ENCODE measurements at regions of chr19 and their contacts with region 1.

Region 1: DNA sequence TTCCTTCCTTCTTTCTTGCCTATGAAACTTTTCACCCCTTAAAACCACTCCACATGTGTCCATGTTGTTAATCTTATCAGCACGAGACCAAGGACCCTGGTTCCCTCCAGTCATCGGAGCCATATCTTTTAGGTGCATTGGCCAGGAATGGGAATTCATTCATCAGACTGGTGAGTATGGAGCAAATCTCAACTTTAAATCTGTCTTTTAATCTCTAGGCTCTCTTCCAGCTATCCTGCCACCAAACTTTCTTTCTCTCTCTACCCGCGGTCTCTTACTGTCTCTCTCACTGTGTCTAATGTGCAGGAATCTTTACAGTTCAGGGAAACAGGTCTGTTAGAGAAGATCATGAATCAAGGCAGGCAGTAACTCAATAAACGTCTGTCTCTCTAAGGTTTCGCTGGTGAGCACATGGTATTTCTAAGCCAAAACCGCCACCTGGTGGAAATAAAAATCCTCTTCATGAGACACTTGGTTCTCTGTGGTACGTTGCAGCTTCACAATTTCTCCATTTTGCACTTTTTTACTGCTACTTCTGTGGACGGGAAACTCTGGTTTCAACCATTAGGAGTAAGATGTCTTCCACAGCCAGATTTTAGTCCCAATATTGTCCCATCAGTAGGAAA is 16.1 kb downstream of the LGALS16 start:
- DNase-seq: peak; percentile 54
- H3K4me3 Mint-ChIP-seq: no peak overlapping the region
- H3K27ac Mint-ChIP-seq: no peak overlapping the region
- H3K4me1 Mint-ChIP-seq: peaks cover 32% of the 10 kb centered on the region
- H3K27me3 Mint-ChIP-seq: peaks cover 11% of the 10 kb centered on the region

Region 2: DNA sequence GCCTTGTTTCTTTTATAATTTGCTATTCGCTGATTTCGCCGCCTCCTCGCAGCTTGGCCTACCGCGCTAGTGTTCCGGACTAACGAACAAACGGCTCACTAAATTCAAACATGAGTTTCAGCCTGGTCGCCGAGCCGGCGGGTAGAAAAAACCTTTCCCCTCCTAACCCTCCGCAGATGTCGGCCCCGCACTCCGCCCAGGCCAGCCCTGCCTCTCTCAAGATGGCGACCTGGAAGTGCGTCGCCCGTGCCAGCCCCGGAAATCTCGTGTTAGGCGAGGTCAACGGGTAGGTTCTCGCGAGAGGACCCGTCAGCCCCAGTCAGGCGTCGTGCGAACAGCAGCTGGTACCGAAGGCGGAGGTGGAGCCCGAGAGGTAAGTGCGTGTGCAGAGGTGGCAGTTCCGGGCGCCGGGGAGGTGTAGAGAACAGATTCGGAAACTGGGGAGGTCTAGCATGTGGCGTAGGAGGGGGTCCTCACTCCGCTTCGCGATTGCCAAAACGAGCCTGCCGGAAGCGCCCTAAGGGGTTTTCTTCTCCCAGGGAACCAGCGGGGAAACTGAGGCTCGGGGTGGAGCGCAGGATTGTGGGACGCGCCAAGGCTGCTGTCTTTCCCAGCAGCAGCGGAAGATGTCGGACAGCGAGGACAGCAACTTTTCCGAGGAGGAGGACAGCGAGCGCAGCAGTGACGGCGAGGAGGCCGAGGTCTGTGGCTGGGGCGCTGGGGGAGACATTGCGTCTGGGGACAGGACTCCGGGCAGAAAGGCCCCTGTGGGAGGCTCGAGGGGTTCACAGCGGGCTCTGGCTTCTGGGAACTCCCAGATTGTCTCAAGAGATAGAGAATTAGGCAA is 226.4 kb before region 1 on chr19 and contains the start of gene SUPT5H:
- CTCF ChIA-PET with region 1: interaction called, 26 read pairs
- POLR2A ChIA-PET with region 1: no interaction called
- intact Hi-C with region 1: loop called (anchors 2 kb)
- DNase-seq: peak; percentile 99
- H3K4me3 Mint-ChIP-seq: peak within 1 kb of the TSS; percentile 98
- H3K27ac Mint-ChIP-seq: peak within 1 kb of the TSS; percentile 99
- H3K4me1 Mint-ChIP-seq: peaks cover 47% of the 10 kb centered on the region
- H3K27me3 Mint-ChIP-seq: no peaks in the 10 kb centered on the region
- total RNA-seq, gene SUPT5H: 180 to 183 TPM

Region 3: DNA sequence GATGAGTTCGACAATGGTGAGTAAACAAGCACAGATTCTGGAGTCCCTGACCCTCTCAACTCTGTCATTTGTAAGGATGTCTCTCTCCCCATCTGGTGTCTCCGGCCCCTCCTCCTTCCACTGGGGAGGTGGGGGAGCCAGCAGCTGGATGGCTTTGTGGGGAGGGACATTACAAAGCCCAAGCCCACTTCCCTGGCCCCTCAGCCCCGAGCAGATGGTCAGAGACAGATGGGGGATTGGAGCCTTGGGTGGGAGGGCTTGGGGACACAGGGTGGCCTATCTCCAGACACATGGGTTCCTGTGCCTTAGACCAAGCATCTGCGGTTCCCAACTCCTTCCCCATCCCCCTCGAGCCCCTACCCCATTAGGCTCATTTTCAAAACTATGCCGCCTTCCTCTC is 188.7 kb before region 1 on chr19:
- CTCF ChIA-PET with region 1: no interaction called
- POLR2A ChIA-PET with region 1: no interaction called
- intact Hi-C with region 1: no loop called
- DNase-seq: no peak
- H3K4me3 Mint-ChIP-seq: peak overlapping the region; percentile 48
- H3K27ac Mint-ChIP-seq: no peak overlapping the region
- H3K4me1 Mint-ChIP-seq: peaks cover 25% of the 10 kb centered on the region
- H3K27me3 Mint-ChIP-seq: no peaks in the 10 kb centered on the region

Region 4: DNA sequence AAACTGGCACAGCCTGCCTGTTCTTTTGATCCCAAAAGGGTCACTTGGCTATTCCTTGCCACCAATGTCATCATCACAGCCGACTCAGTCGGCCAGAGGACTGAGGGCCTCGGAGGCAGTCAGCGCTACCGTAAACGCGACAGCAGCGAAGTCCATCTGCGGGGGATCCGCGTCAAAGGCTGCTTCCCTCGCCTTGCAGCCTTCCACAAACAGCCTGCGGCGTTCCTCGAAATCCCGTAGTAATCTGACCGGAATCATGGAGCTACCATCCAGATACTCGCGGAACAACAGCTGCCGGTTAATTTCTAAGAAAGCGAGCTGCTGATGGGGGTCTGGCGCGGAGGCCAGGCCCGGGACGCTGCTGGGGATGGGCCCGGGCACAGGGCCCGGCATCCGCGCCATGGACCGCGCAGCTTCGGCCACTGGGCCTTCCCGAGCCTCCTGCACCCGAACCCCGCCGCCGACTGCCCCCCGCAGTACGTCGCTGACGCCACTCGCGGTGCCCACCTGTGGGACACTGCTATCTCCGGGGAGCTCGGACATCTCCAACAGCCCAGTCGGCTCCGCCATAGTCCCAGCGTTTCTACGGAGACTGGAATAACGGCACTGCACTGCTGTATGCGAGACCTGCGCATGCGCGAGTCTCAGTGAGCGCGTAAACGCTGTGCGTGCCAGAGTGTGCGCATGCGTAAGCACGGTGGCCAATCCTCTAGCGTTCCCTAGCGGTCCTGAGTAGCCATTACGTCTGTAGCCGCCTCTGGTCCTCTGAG is 139.4 kb before region 1 on chr19 and contains the start of gene EID2B:
- CTCF ChIA-PET with region 1: interaction called, 12 read pairs
- POLR2A ChIA-PET with region 1: interaction called, 3 read pairs
- intact Hi-C with region 1: no loop called
- DNase-seq: peak; percentile 96
- H3K4me3 Mint-ChIP-seq: peak within 1 kb of the TSS; percentile 91
- H3K27ac Mint-ChIP-seq: peak within 1 kb of the TSS; percentile 65
- H3K4me1 Mint-ChIP-seq: peaks cover 20% of the 10 kb centered on the region
- H3K27me3 Mint-ChIP-seq: no peaks in the 10 kb centered on the region
- total RNA-seq, gene EID2B: 3.3 to 3.8 TPM

Region 5: DNA sequence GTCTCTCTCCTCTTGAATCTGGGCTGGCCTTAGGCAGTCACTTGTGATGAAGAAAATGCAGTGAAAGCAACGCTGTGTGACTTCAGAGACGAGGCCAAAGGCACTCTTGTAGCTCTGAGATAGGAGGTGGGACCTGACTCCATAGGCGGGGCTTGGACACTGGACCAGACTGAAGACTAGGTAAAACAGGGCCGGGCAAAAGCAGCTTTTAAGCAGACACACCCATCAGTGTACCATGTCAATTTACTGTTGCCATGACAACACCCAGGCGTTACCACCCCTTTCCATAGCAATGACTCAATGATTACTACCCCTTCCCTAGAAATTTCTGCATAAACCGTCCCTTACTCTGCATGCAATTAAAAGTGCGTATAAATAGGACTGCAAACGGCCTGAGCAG is 125.3 kb before region 1 on chr19:
- CTCF ChIA-PET with region 1: interaction called, 137 read pairs
- POLR2A ChIA-PET with region 1: interaction called, 4 read pairs
- intact Hi-C with region 1: loop called (anchors 1 kb)
- DNase-seq: peak; percentile 34
- H3K4me3 Mint-ChIP-seq: no peak overlapping the region
- H3K27ac Mint-ChIP-seq: no peak overlapping the region
- H3K4me1 Mint-ChIP-seq: peaks cover 41% of the 10 kb centered on the region
- H3K27me3 Mint-ChIP-seq: no peaks in the 10 kb centered on the region

Region 6: DNA sequence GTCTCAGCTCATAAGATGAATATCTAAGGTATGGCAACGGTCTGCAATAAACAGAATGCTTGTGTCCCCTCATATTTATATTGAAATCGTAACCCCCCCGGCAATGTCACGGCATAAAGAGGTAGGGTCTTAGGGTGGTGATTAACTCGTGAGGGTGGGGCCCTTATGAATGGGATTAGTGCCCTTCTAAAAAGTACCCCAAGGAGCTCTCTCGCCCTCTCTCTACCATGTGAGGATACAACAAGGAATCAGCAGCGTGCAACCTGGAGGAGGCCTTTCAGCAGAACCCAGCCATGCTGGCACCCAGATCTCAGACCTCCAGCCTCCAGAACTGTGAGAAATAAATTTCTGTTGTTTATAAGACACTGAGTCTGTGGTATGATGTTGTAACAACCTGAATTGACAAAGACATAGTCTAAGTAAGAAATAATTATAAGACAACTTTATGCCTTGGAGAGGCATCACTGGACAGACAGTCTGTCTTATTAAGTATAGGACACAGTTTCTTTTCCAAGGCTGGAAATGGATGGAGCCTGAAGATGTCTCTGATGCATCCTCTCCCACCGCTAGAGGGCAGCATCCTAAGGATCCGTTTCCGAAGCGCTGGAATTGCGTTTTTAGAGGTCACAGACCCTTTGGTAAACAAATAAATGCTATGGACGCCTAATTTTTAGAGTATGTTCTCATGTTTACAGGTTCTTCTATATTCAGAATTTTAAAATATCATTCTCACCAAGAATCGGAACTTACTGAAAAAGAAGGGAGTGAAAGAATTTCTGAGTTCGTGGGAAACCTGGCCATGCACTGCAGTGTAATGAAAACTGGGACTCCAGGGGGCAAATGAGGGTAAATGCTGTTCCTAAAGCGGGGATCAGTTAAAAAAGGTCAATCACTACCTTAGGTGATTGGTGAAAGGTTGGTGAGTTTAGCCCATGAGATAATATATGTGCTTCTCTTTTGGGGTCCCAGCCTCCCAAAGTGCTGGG is 93.5 kb after region 1 on chr19:
- CTCF ChIA-PET with region 1: interaction called, 49 read pairs
- POLR2A ChIA-PET with region 1: no interaction called
- intact Hi-C with region 1: loop called (anchors 2 kb)
- DNase-seq: peak; percentile 41
- H3K4me3 Mint-ChIP-seq: no peak overlapping the region
- H3K27ac Mint-ChIP-seq: no peak overlapping the region
- H3K4me1 Mint-ChIP-seq: peaks cover 3% of the 10 kb centered on the region
- H3K27me3 Mint-ChIP-seq: peaks cover 7% of the 10 kb centered on the region

Region 7: DNA sequence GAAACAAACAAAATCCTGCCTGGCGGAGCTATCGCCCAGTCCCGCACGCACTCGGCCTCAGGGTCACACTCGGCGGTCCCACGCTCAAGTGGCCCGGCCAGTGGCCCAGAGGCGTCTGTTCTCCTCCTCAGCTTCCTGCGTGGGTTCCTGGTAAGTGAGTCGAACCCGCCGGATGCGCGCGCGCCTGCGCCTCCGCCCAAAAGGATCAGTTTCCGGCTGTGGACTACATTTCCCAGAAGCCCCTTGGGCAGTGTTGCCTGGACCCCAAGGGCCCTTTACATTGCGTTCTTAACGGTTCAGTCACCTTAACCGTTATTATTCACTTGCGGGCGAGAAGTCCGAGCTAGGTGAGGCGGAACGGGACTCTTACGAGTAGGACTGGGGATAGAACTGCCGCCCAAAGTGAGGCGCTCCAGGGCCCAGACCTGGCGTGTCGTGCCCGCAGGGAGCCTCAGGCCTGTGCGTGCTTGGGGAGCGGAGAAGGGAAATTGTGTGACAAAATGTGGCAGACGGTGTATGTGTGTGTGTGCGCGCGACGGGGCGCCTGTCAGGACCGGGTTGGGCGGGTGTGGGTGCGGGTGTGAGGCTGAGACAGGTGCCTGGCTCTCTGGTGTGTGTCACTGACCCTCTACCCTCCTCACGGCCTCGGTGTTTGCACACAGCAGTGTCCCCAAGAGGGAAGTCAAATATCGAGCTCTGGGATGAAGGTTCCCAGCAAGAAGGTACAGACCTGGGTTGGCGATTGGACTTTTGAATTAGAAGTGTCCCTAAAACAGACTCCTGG is 325.2 kb after region 1 on chr19 and contains the start of gene ZNF546:
- CTCF ChIA-PET with region 1: no interaction called
- POLR2A ChIA-PET with region 1: no interaction called
- intact Hi-C with region 1: loop called (anchors 10 kb)
- DNase-seq: peak; percentile 95
- H3K4me3 Mint-ChIP-seq: peak within 1 kb of the TSS; percentile 98
- H3K27ac Mint-ChIP-seq: peak within 1 kb of the TSS; percentile 95
- H3K4me1 Mint-ChIP-seq: peaks cover 36% of the 10 kb centered on the region
- H3K27me3 Mint-ChIP-seq: no peaks in the 10 kb centered on the region
- total RNA-seq, gene ZNF546: 4.2 to 5.5 TPM

Measured in activated CD4-positive, alpha-beta memory T cell treated with anti-CD3 and anti-CD28 coated beads for 36 hours (primary cell).